Common myeloid progenitor, CD34-positive (primary cell): ENCODE measurements at regions of chr6 and their contacts with region 1.

Region 1: GRCh38 chr6:138001750-138002349 is 105.4 kb downstream of the PERP start:
- DNase-seq: peak; percentile 37 to 69 (median 60)
- H3K4me3 ChIP-seq: no peak overlapping the region
- H3K27ac ChIP-seq: no peak overlapping the region
- H3K4me1 ChIP-seq: no peaks in the 10 kb centered on the region
- H3K27me3 ChIP-seq: peaks cover 0 to 3% (median 0%) of the 10 kb centered on the region in 5 experiments

Region 2: GRCh38 chr6:137989664-137990063 is 12.2 kb before region 1 on chr6:
- CTCF ChIA-PET with region 1: interaction called, 10 read pairs
- POLR2A ChIA-PET with region 1: no interaction called
- DNase-seq: no peak
- H3K4me3 ChIP-seq: no peak overlapping the region
- H3K27ac ChIP-seq: no peak overlapping the region
- H3K4me1 ChIP-seq: no peaks in the 10 kb centered on the region
- H3K27me3 ChIP-seq: no peaks in the 10 kb centered on the region

Region 3: DNA sequence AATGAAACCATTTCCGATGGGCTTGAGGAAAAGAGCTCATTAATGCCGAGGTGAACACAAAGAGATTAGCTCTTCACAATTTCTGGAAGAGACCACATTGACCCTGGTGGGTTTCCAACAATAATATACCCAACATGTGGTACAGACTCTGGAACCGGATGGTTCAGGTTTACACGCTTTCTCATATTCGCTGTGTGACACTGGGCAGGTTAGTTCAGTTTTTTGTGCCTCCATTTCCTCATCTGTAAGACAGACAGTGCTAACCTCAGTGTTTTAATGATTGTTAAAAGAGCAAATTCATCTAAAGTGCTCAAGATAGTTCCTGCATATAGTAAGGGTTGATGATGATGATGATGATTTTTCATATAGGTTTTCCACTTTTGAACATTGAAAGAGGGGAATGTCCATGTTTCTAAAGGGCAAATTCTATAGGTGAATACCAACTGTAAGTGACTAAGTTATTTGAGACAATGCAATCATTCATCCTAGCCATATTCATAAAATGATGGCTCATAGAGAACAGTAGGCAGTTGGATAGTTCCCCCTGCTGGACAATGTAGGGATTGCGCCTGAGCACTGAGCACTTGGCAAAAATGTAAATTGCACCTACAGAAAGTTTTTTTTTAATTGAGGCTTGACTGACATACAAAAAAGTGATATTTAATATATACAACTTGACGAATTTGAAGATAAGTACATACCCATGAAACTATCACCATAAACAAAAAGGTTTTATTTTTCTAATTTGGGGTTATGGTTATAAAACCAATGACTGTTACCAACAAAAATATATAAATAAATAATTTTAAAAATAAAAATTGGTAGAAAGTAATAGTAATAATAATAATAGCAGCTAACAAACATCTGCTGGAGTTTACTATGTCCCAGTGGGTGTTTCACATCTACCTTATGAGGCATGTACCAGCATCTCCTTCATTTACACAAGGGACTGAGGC is 107.5 kb after region 1 on chr6:
- CTCF ChIA-PET with region 1: interaction called, 40 read pairs
- POLR2A ChIA-PET with region 1: interaction called, 3 read pairs
- DNase-seq: peak; percentile 78 to 89 (median 83)
- H3K4me3 ChIP-seq: no peak overlapping the region
- H3K27ac ChIP-seq: no peak overlapping the region
- H3K4me1 ChIP-seq: peaks cover 0 to 19% (median 11%) of the 10 kb centered on the region in 4 experiments
- H3K27me3 ChIP-seq: peaks cover 28 to 52% (median 33%) of the 10 kb centered on the region in 5 experiments

Region 4: DNA sequence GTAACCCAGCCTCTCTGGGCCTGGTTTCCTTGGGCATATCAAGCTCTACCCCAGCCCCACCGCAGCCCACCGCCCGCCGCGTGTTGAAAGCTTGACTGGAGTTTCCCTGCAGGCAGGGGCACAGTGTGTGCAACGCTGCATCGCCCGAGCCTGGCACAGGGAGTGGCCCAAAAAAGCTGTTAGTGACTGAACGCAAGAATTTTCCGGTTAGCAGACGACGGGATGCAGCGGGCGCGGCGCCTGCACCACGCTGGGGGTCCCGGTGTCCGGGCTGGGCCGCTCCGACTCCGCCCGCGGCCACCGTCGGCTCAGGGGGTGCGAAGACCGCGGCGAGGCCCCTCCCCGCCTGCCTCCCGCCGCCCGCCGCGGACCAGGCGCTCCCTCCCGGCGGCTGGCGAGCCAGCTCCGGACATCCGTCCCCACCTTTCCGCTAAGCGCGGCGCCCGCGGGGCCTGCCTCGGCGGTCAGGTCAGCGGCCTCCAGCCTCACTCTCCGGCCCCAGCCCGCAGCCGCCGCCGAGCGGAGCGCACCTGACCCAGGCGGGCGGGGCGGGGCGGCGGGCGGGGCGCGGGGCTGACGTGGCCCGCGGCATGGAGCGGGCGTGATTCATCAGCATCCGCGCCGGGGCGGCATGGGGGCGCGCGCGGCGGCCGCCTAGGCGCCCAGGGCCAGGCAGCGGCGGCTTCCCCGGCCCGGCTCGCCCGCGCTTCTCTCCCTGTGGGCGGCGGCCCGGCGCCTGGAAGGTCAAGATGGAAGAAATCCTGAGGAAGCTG is 159.7 kb after region 1 on chr6 and contains the start of gene ARFGEF3:
- CTCF ChIA-PET with region 1: no interaction called
- POLR2A ChIA-PET with region 1: no interaction called
- DNase-seq: peak; percentile 21 to 63 (median 53)
- H3K4me3 ChIP-seq: peak within 1 kb of the TSS; percentile 17 to 82 (median 59)
- H3K27ac ChIP-seq: no peak within 1 kb of the TSS
- H3K4me1 ChIP-seq: peaks cover 0 to 20% (median 16%) of the 10 kb centered on the region in 4 experiments
- H3K27me3 ChIP-seq: peaks cover 19 to 62% (median 28%) of the 10 kb centered on the region in 5 experiments